B cell (primary cell): ENCODE measurements at regions of chr21 and their contacts with region 1.

Region 1: GRCh38 chr21:33924079-33924765 is 8.6 kb upstream of the ATP5PO start:
- DNase-seq: peak; percentile 85
- ATAC-seq: peak; percentile 95
- H3K4me3 ChIP-seq: no peak overlapping the region
- H3K4me3 Mint-ChIP-seq: no peak overlapping the region
- H3K27ac ChIP-seq: no peak overlapping the region
- H3K27ac Mint-ChIP-seq: no peak overlapping the region
- H3K4me1 ChIP-seq: peaks cover 0 to 5% of the 10 kb centered on the region in 2 donors
- H3K4me1 Mint-ChIP-seq: peaks cover 3% of the 10 kb centered on the region
- H3K27me3 ChIP-seq: peaks cover 0 to 3% (median 0%) of the 10 kb centered on the region in 4 experiments
- H3K27me3 Mint-ChIP-seq: peaks cover 3% of the 10 kb centered on the region
- CTCF ChIP-seq: peak; percentile 92

Region 2: GRCh38 chr21:33940164-33940880 is 16.1 kb after region 1 on chr21:
- CTCF ChIA-PET with region 1: interaction called, 39 read pairs
- POLR2A ChIA-PET with region 1: no interaction called
- intact Hi-C with region 1: no loop called
- DNase-seq: no peak
- ATAC-seq: no peak
- H3K4me3 ChIP-seq: no peak overlapping the region
- H3K4me3 Mint-ChIP-seq: no peak overlapping the region
- H3K27ac ChIP-seq: no peak overlapping the region
- H3K27ac Mint-ChIP-seq: no peak overlapping the region
- H3K4me1 ChIP-seq: peaks cover 0 to 16% of the 10 kb centered on the region in 2 donors
- H3K4me1 Mint-ChIP-seq: peaks cover 9% of the 10 kb centered on the region
- H3K27me3 ChIP-seq: no peaks in the 10 kb centered on the region
- H3K27me3 Mint-ChIP-seq: no peaks in the 10 kb centered on the region
- CTCF ChIP-seq: no peak

Region 3: DNA sequence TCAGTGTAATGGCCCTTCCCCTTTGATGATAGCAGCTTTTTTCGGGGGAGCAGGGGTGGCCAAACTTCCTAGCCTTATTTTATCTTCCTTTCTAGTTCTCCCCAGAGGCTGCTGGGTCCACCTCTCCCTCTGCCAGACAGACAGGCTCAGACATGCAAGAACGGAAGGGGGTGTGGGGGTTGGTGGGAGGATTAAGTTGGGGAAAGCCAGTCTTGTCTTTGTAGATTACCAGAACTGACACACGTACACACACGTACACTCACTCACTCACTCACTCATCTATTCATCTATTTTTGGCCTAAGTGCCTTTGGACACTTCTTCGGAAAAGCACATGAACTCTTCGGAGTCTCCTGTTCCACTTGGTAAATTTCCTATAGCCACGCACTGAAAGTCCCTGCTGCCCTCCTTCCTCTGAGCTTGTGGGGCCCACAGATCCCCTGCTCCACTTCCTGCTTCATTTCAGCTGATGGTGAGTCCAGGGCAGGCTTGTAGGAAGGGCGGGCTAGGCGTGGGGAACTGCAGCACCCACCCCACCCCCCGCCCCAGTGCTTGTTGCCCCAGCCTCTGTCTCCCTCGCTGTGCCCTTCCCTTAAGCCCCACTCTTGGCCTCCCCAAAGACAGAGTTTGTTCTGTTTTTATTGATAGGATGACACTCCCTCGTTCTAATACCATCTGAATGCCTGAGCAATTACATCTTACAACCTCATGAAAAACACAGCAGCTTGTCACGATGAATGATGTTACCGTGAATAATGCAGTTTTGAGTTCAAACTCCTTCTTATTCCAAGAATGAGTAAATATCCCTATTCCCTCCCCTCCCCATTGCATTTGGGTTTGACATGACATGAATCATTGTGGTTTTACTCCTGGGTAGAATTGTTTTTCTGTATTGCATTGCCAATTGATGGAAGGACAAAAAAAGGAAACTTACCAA is 52.1 kb after region 1 on chr21:
- CTCF ChIA-PET with region 1: interaction called, 23 read pairs
- POLR2A ChIA-PET with region 1: no interaction called
- intact Hi-C with region 1: no loop called
- DNase-seq: peak; percentile 29
- ATAC-seq: peak; percentile 26
- H3K4me3 ChIP-seq: peak overlapping the region in 2 of 5 experiments; percentile 14 to 37
- H3K4me3 Mint-ChIP-seq: peak overlapping the region; percentile 69
- H3K27ac ChIP-seq: peak overlapping the region; percentile 42 to 57
- H3K27ac Mint-ChIP-seq: peak overlapping the region; percentile 80
- H3K4me1 ChIP-seq: peaks cover 17 to 29% of the 10 kb centered on the region in 2 donors
- H3K4me1 Mint-ChIP-seq: peaks cover 34% of the 10 kb centered on the region
- H3K27me3 ChIP-seq: no peaks in the 10 kb centered on the region
- H3K27me3 Mint-ChIP-seq: no peaks in the 10 kb centered on the region
- CTCF ChIP-seq: no peak

Region 4: GRCh38 chr21:34091607-34092006 is 167.4 kb after region 1 on chr21:
- CTCF ChIA-PET with region 1: interaction called, 21 read pairs
- POLR2A ChIA-PET with region 1: no interaction called
- intact Hi-C with region 1: no loop called
- DNase-seq: no peak
- ATAC-seq: no peak
- H3K4me3 ChIP-seq: no peak overlapping the region
- H3K4me3 Mint-ChIP-seq: no peak overlapping the region
- H3K27ac ChIP-seq: no peak overlapping the region
- H3K27ac Mint-ChIP-seq: no peak overlapping the region
- H3K4me1 ChIP-seq: peaks cover 9 to 10% of the 10 kb centered on the region in 2 donors
- H3K4me1 Mint-ChIP-seq: peaks cover 42% of the 10 kb centered on the region
- H3K27me3 ChIP-seq: no peaks in the 10 kb centered on the region
- H3K27me3 Mint-ChIP-seq: no peaks in the 10 kb centered on the region
- CTCF ChIP-seq: peak; percentile 44

Region 5: DNA sequence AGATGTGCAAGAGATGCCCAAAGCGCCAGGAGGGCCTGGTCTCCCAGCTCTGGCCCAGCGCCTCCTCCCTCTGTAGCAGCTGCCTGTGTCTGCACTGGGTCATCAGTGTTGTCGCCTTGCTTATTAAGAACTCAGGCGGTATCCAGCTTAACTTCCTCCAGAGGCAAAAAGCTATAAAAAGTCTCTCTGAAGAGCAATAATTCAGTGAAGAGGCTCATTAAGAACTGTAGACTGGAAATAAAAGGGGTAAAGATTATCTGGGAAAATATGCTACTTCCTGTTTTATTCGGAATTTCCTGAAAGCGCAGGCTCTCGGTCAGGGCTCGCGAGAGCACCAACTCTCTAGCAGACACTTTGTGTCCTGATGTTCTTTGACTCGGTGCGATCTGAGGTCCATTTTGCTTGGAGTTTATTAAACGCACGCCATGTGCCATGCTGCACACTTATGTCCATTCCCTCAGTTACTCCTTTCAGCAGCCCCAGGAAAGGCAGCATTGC is 219.5 kb after region 1 on chr21:
- CTCF ChIA-PET with region 1: no interaction called
- POLR2A ChIA-PET with region 1: no interaction called
- intact Hi-C with region 1: no loop called
- DNase-seq: no peak
- ATAC-seq: no peak
- H3K4me3 ChIP-seq: no peak overlapping the region
- H3K4me3 Mint-ChIP-seq: no peak overlapping the region
- H3K27ac ChIP-seq: no peak overlapping the region
- H3K27ac Mint-ChIP-seq: no peak overlapping the region
- H3K4me1 ChIP-seq: no peaks in the 10 kb centered on the region
- H3K4me1 Mint-ChIP-seq: peaks cover 10% of the 10 kb centered on the region
- H3K27me3 ChIP-seq: no peaks in the 10 kb centered on the region
- H3K27me3 Mint-ChIP-seq: no peaks in the 10 kb centered on the region
- CTCF ChIP-seq: no peak

Region 6: DNA sequence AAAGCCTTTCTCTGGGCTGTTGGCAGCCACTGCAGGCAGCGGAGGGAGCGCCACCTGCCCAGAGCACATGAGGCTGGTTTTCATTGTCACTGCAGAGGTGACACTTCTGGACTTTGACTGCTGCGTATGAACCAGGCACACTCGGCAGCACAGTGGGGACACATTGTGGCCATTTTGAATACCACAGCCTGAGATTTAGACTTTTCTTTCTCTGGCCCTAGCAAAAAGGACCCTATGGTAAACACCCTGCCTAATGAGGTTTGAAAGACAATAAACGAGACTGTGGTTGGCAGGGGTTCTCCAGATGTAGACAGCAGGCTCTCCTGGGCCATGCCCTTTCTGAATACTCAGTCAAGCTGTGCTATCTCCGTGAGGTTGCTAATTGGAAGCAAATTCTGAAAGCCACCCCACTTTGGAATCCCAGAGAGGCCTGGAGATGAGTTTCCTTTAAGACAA is 427.6 kb after region 1 on chr21:
- CTCF ChIA-PET with region 1: interaction called, 632 read pairs
- POLR2A ChIA-PET with region 1: no interaction called
- intact Hi-C with region 1: loop called (anchors 1 kb)
- DNase-seq: peak; percentile 55
- ATAC-seq: peak; percentile 78
- H3K4me3 ChIP-seq: no peak overlapping the region
- H3K4me3 Mint-ChIP-seq: no peak overlapping the region
- H3K27ac ChIP-seq: no peak overlapping the region
- H3K27ac Mint-ChIP-seq: no peak overlapping the region
- H3K4me1 ChIP-seq: no peaks in the 10 kb centered on the region
- H3K4me1 Mint-ChIP-seq: peaks cover 4% of the 10 kb centered on the region
- H3K27me3 ChIP-seq: no peaks in the 10 kb centered on the region
- H3K27me3 Mint-ChIP-seq: peaks cover 26% of the 10 kb centered on the region
- CTCF ChIP-seq: peak; percentile 58

Region 7: GRCh38 chr21:34630536-34631143 is 706.4 kb after region 1 on chr21:
- CTCF ChIA-PET with region 1: interaction called, 15 read pairs
- POLR2A ChIA-PET with region 1: no interaction called
- intact Hi-C with region 1: loop called (anchors 2 kb)
- DNase-seq: peak; percentile 69
- ATAC-seq: peak; percentile 63
- H3K4me3 ChIP-seq: no peak overlapping the region
- H3K4me3 Mint-ChIP-seq: no peak overlapping the region
- H3K27ac ChIP-seq: no peak overlapping the region
- H3K27ac Mint-ChIP-seq: no peak overlapping the region
- H3K4me1 ChIP-seq: no peaks in the 10 kb centered on the region
- H3K4me1 Mint-ChIP-seq: no peaks in the 10 kb centered on the region
- H3K27me3 ChIP-seq: peaks cover 0 to 3% (median under 1%) of the 10 kb centered on the region in 4 experiments
- H3K27me3 Mint-ChIP-seq: peaks cover 16% of the 10 kb centered on the region
- CTCF ChIP-seq: peak; percentile 93